ENCODE measurements at regions of chr19 and their contacts with region 1.

Region 1: DNA sequence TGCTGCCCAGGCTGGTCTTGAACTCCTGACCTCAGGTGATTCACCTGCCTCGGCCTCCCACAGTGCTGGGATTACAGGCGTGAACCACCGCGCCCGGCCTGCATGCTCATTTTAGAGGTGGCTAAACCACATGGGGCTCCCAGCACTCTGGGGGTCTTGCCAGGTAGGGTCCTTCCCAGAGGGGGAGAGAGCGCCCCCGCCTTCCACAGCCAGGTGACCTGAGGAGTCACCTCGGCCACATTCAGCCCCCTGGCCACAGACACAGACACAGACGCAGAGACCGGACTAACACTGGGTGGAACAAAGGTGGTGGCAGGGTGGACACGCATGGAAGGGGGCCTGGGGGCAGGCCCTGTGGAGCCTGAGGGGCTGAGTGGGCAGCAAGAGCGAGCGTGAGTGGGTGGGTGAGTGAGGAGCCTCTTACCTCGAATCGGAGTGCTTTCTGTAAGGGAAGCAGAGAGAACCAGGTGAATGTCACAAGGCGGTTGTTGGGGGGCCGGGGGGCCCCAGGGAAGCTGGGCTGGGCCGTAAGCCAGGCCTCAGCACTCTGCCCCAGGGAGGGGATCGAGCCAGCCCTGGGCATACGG is 80.1 kb downstream of the PTPRS start:
- DNase-seq: no peak

Region 2: GRCh38 chr19:5294403-5295160 is 34.1 kb after region 1 on chr19:
- intact Hi-C with region 1: loop called in 1 of 2 experiments (anchors 1 kb)
- DNase-seq: no peak